Left cardiac atrium (tissue), 4 donors: ENCODE measurements at regions of chr9 and their contacts with region 1.

Region 1: DNA sequence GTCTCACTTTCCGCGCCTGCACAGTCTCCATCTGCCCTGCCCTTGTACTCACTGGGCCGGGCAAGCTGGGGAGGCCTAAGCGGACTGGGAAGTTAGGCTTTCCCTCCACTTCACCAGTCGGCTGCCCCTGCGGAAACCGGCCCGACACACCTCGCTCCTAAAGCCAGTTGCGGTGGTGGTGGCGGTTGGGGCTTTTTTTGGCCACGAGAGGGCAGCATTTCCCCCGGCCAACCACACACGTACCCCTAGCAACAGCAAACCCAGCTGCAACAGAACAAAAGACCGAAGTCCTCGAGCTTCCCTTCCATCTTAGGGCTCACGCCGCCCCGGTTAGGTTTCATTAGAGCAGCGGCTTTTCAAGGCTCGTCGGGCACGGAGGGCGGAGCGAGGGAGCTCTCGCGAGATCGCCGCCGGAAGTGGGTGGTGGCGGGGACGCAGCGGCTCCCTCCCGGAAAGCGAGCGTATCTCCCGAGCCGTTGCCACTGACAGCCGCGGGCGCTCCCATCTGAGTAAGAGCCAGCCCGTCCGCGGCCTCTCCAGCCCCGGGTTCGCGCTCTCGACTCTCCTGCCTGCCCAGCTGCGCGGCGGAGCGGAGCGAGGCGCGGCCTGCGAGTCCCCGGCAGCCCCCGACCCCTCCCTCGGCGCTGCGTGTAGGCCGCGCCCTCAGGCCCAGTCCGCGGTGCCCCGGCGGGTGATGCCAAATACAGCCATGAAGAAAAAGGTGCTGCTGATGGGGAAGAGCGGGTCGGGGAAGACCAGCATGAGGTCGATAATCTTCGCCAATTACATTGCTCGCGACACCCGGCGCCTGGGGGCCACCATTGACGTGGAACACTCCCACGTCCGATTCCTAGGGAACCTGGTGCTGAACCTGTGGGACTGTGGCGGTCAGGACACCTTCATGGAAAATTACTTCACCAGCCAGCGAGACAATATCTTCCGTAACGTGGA is at the start of gene RRAGA:
- DNase-seq: peak; percentile 94
- ATAC-seq: peak; percentile 96 to 97
- total RNA-seq, gene RRAGA: 72.1 to 94.6 TPM

Region 2: DNA sequence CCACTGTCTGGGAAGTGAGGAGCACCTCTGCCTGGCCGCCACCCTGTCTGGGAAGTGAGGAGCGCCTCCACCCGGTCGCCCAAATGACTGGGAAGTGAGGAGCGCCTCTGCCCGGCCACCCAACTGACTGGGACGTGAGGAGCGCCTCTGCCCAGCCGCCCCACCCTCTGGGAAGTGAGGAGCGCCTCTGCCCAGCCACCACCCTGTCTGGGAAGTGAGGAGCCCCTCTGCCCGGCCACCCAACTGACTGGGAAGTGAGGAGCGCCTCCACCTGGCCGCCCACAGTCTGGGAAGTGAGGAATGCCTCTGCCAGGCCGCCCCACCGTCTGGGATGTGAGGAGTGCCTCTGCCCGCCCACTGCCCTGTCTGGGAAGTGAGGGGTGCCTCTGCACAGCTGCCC is 49.1 kb before region 1 on chr9:
- intact Hi-C with region 1: no loop called
- DNase-seq: no peak
- ATAC-seq: no peak

Region 3: DNA sequence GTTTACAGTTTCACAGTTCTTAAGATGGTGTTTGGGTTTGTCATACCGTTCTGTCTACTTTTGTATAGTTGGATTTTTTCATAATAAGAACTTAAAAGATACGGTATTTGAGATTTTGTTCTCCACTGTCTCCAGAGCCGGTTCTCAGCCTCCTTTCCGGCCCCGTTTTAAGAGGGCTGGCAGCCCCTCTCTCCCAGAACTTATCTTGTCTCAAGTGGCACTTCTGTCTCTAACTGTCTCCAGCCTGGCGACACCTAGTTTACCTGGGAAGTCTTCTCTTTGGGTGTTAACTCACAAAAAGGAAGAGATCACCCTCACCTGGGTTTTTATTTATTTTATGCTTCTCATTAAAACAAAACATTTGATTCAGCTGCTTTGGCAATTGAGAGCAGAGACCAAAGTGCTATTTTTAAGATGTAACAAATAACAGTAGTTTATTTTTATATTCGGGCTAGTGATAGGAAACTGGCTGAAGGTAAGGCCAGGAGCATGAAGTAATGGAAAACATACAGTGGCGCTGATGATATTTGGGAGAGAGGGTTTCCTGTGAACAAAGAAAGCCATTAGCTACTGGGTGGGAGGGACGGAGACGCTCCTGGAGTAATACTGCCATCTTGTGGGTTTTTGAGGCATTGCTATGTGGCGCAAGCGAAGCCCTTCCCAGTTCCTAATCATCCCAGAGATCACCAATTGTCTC is 407.9 kb after region 1 on chr9:
- intact Hi-C with region 1: loop called in 1 of 2 experiments (anchors 2 kb)
- DNase-seq: peak; percentile 55
- ATAC-seq: peak; percentile 92 to 97